ENCODE measurements at regions of chr1 and their contacts with region 1.

Region 1: GRCh38 chr1:52424231-52424636 is 19.8 kb downstream of the PRPF38A start:
- DNase-seq: no peak
- H3K4me3 ChIP-seq: no peak overlapping the region
- H3K27ac ChIP-seq: peak overlapping the region in 1 of 4 donors; percentile 33
- H3K4me1 ChIP-seq: peaks cover 0 to 11% (median 0%) of the 10 kb centered on the region in 3 donors
- H3K27me3 ChIP-seq: no peaks in the 10 kb centered on the region
- CTCF ChIP-seq: no peak
- POLR2A ChIP-seq: no peak

Region 2: DNA sequence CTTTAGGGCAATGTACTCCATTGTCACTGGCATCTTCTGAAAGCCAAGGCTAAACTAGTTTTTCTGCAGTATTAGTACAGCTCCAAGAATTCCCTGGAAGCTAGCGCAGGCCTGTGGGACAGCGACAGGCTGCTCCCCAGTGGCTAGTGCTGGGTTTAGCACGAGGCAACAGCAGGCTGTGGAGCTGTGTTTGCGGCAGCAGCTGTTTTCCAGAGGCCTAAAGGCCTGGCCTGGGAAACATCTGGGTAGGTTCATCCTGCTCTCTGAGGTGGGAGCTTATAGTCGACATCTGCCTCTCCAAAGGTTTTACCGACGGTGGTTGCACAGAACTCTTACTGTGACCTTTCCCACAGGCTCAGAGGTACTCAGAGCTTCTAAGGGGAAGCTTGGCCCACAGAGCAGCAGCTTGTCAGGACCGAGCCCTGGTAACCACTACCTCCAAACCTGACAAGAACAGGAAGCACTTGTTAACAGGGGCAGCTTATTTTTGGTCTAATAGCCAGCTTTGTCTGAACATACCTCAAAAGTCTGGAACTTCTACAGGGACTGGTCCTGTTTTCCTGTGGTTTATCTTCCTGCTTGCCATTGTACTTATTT is 75.4 kb before region 1 on chr1:
- intact Hi-C with region 1: no loop called
- DNase-seq: no peak
- H3K4me3 ChIP-seq: no peak overlapping the region
- H3K27ac ChIP-seq: peak overlapping the region in 1 of 4 donors; percentile 3
- H3K4me1 ChIP-seq: peaks cover 0 to 22% (median 0%) of the 10 kb centered on the region in 3 donors
- H3K27me3 ChIP-seq: no peaks in the 10 kb centered on the region
- CTCF ChIP-seq: peak in 4 of 6 experiments; percentile 9 to 53 (median 30)
- POLR2A ChIP-seq: no peak

Region 3: GRCh38 chr1:52683367-52683940 is 259.2 kb after region 1 on chr1:
- intact Hi-C with region 1: loop called (anchors 10 kb)
- DNase-seq: no peak
- H3K4me3 ChIP-seq: no peak overlapping the region
- H3K27ac ChIP-seq: no peak overlapping the region
- H3K4me1 ChIP-seq: no peaks in the 10 kb centered on the region
- H3K27me3 ChIP-seq: no peaks in the 10 kb centered on the region
- CTCF ChIP-seq: no peak
- POLR2A ChIP-seq: no peak